Left cardiac atrium (tissue), 4 donors: ENCODE measurements at regions of chr19 and their contacts with region 1.

Region 1: DNA sequence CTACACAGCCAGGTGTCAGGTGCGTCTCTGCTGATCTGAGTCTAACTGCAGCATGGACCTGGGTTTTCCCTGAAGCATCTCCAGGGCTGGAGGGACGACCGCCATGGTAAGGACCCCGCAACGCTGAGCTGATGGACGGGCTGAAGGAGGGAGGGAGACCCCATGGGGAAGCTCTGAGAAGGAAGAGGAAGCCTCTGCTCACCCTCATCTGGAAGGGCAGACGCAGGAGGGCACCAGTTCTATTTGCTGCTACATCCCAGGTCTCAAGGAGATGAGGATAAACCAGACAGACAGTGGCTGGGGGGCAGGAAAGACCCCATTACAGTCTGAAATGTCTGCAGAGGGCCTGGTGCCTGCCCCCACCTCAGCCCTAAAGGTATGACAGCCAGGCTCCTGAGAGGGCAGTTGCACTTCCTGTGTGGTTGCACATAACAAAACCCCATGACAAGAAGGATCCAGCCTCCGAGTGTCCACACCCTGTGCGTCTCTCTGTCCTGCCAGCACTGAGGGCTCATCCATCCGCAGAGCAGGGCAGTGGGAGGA is at the start of gene LILRA2:
- DNase-seq: no peak
- ATAC-seq: peak; percentile 27 to 68
- total RNA-seq, gene LILRA2: 2.1 to 5.8 TPM

Region 2: DNA sequence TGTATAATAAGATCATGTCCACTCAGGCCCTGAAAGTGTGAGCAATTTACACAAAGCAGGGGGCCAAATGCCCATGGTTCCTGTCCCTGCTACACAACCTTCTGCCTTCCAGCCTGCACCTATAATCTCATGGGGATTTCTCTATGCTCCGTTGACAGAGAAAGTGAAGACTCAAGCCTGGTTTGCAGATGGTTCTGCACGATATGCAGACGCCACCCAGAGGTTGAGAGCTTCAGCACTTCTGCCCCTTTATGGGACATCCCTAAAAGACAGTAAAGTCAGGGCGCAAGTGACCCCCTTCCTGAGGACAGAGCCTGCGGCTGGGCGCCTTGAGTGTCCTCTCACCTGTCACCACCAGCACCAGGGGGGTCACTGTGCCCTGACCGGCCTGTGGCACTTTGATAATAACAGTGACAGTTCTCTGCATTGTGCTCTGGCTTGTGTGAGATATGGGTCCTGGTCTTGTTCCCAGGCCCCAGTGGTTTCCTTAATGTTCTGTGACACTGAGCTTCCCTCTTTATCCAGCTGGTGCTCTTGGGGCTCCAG is 275.6 kb before region 1 on chr19:
- intact Hi-C with region 1: loop called in 1 of 2 experiments (anchors 10 kb)
- DNase-seq: no peak
- ATAC-seq: no peak